Adrenal gland (tissue), 19 donors: ENCODE measurements at regions of chr16 and their contacts with region 1.

Region 1: DNA sequence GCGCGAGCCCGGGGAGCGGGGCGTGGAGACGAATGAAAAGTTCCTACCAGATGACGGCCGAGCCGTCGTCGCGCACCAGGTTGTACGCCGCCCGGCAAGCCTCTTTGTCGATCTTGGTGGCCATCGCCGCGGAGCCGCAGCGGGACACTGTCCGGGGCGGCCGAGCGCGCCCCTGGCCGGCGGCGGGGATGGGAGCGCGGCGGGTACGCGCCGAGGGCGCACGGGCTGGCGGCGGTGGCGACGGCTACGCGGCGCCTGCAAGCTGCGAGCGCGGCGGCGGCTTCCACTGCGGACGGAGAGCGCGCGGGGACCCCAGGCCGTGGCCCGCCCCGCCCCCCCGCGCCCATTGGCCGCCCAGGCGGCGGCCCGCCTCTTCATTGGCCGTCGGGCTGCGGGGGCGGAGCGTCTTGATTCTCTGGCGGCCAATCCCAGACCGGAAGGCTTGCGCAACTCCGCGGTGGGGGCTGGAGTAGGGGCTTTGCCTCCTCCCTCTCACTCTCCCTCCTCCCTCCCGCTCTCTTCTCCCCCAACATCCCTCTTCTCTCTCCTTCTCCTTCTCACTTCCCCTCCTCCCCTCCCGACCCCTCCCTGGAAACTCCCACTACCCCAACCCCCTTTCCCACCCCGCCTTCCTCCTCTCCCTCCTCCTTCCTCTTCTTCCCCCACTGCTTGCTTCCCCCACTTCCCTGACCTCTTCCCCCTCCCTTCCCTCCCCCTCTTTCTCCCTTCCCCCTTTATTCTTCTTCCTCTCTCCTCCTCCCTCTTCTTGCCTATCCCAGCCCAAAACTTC is at the start of gene COTL1:
- DNase-seq: peak; percentile 96 to 98 (median 97)
- H3K4me3 ChIP-seq: peak within 1 kb of the TSS in 3 of 4 donors; percentile 44 to 89 (median 59)
- H3K27ac ChIP-seq: peak within 1 kb of the TSS in 3 of 5 donors; percentile 60 to 89 (median 69)
- H3K4me1 ChIP-seq: peaks cover 0 to 36% of the 10 kb centered on the region in 2 donors
- H3K27me3 ChIP-seq: no peaks in the 10 kb centered on the region
- CTCF ChIP-seq: no peak
- POLR2A ChIP-seq: peak; percentile 74 to 78
- total RNA-seq, gene COTL1: 20.1 to 93.8 (median 56.8) TPM

Region 2: DNA sequence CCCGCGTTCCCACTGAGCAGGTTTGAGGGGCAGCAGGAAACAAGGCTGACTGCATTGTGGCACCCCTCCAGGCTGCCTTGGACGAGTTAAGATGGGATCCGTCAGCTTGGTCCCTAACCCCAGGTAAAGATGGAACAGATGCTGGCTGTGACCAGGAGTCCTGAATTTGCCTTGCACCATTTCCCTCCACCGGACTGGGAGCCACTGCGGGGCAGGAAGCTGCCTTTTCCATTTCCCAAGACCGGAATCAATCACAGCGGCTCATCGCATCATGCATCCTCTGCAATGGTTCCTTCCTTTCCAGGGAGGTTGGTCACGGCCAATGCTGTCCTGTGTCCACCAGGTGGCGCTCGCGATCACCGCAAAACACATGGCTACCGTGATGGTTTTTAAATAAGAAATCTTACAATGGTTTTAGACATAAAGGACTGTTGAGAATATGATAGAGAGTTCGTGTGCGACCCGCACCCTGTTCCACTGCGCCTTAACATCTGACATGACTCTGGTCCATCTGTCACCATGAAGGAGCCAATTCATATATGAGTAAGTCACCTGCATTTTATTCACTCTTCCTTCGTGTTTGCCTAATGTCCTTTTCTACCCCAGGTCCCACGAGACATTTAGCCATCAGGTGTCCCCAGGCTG is 106.7 kb before region 1 on chr16:
- intact Hi-C with region 1: loop called (anchors 2 to 5 kb)
- DNase-seq: peak; percentile 78 to 95 (median 82)
- H3K4me3 ChIP-seq: no peak overlapping the region
- H3K27ac ChIP-seq: no peak overlapping the region
- H3K4me1 ChIP-seq: peaks cover 0 to 4% of the 10 kb centered on the region in 2 donors
- H3K27me3 ChIP-seq: no peaks in the 10 kb centered on the region
- CTCF ChIP-seq: peak; percentile 92 to 99 (median 96)
- POLR2A ChIP-seq: no peak

Region 3: DNA sequence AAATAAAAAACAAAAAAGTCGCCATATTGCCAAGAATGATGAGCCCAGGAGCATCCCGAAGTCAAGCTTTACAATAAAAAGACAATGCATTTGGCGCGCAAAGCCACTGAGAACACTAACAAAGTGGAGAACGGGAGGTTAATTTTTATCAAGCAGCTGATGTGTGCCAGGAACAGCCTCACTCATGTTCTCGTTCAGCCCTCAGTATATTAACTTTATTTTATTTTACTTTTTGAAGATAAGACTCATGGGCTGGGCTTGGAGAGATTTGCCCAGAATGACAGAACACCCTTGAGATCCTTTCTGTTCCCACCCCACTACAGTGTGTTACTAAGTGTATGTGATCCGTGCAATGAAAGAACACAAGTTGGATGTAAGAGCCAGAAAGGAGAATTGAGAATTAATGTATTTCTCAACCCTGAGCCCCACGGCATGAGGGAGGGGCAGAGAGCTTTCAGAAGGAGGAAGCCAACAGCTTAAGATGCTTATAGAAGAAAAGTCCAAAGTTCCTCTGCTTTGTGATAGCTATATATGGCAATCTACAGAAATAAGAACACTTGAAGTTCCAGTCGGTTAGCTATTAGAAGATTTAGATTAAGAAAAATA is 48.5 kb before region 1 on chr16:
- intact Hi-C with region 1: no loop called
- DNase-seq: no peak
- H3K4me3 ChIP-seq: no peak overlapping the region
- H3K27ac ChIP-seq: no peak overlapping the region
- H3K4me1 ChIP-seq: no peaks in the 10 kb centered on the region
- H3K27me3 ChIP-seq: no peaks in the 10 kb centered on the region
- CTCF ChIP-seq: no peak
- POLR2A ChIP-seq: no peak

Region 4: GRCh38 chr16:84738255-84739038 is 120.5 kb after region 1 on chr16:
- intact Hi-C with region 1: no loop called
- DNase-seq: peak; percentile 57 to 92 (median 81)
- H3K4me3 ChIP-seq: no peak overlapping the region
- H3K27ac ChIP-seq: no peak overlapping the region
- H3K4me1 ChIP-seq: peaks cover 0 to 46% of the 10 kb centered on the region in 2 donors
- H3K27me3 ChIP-seq: no peaks in the 10 kb centered on the region
- CTCF ChIP-seq: peak; percentile 77 to 90 (median 86)
- POLR2A ChIP-seq: no peak